ENCODE measurements at regions of chr13 and their contacts with region 1.

Region 1: DNA sequence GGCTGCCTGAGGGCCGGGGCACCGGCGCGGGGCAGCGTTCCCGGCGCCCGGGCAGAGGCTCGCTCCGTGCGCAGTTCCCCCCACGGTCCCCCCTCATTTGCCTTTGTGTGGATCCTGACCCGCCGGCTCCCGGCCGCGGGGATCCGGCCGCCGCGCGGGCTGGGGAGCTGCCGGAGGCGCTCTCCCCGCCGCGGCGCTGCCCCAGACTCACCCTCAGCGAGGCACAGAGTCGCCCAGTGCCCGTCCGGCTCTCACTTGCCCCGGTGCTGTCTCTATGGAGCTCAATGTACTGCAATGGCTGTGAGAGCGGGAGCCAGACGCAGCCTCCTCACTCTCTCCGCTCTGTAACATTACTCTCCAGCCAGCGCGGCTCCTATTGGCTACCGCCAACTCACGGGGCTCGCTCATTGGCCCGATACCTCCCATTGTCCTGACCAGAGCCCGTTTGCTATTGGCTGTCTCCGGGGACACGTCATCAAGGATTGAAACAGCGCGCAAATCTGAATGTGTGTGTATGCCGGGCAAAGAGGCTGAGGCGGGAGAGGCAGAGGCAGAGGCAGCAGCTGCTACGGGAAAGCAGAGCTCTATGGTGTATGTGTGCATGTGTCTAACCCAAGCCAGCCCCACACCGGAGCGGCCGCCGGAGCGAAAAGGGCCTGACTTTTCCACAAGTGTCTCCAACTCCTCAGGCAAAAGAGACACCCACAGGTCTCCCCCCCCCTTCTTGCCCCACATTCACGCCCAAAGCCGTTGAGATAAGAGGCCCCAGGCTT is at the start of gene HMGB1:
- DNase-seq: peak; percentile 98 to 99
- H3K4me3 ChIP-seq: peak within 1 kb of the TSS; percentile 58 to 90 (median 59)
- H3K27ac ChIP-seq: peak within 1 kb of the TSS; percentile 93 to 100 (median 99)
- H3K4me1 ChIP-seq: peaks cover 16 to 25% of the 10 kb centered on the region in 2 donors
- H3K27me3 ChIP-seq: no peaks in the 10 kb centered on the region
- CTCF ChIP-seq: peak in 1 of 6 experiments; percentile 5
- POLR2A ChIP-seq: peak; percentile 94 to 99
- total RNA-seq, gene HMGB1: 255 to 467 (median 327) TPM

Region 2: GRCh38 chr13:30132623-30133553 is 332.9 kb before region 1 on chr13:
- intact Hi-C with region 1: loop called (anchors 5 kb)
- DNase-seq: peak; percentile 99 to 100
- H3K4me3 ChIP-seq: no peak overlapping the region
- H3K27ac ChIP-seq: no peak overlapping the region
- H3K4me1 ChIP-seq: peaks cover under 1 to 20% of the 10 kb centered on the region in 2 donors
- H3K27me3 ChIP-seq: no peaks in the 10 kb centered on the region
- CTCF ChIP-seq: peak; percentile 79 to 94 (median 91)
- POLR2A ChIP-seq: no peak

Region 3: DNA sequence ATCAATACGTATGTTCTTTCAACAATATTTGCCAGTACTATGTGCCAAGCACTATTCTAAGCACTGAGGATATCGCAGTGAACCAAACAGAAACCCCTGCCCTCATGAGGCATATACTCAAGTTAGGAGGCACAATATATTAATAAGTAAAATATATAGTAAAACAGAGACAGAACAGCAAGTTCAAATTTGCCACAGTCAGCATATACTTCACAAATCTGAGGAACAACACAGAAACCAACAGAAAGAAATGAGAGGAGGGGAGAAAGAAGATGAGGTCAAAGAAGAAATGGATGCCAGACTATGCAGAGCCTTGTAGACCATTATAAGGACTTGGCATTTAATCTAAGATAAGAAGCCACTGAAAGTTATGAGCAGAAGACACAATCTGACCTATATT is 218.4 kb before region 1 on chr13:
- intact Hi-C with region 1: no loop called
- DNase-seq: no peak
- H3K4me3 ChIP-seq: no peak overlapping the region
- H3K27ac ChIP-seq: no peak overlapping the region
- H3K4me1 ChIP-seq: no peaks in the 10 kb centered on the region
- H3K27me3 ChIP-seq: no peaks in the 10 kb centered on the region
- CTCF ChIP-seq: no peak
- POLR2A ChIP-seq: no peak

Region 4: GRCh38 chr13:30617315-30618185 is 151.8 kb after region 1 on chr13 and contains the start of gene USPL1:
- intact Hi-C with region 1: loop called (anchors 10 kb)
- DNase-seq: peak; percentile 98
- H3K4me3 ChIP-seq: peak within 1 kb of the TSS; percentile 49 to 93 (median 82)
- H3K27ac ChIP-seq: peak within 1 kb of the TSS; percentile 99 to 100 (median 99)
- H3K4me1 ChIP-seq: peaks cover 10 to 26% of the 10 kb centered on the region in 2 donors
- H3K27me3 ChIP-seq: no peaks in the 10 kb centered on the region
- CTCF ChIP-seq: peak in 4 of 6 experiments; percentile 29 to 68 (median 58)
- POLR2A ChIP-seq: peak; percentile 94 to 95
- total RNA-seq, gene USPL1: 23.6 to 31.0 (median 27.5) TPM

Region 5: GRCh38 chr13:30802953-30803478 is 337.2 kb after region 1 on chr13:
- intact Hi-C with region 1: loop called (anchors 10 kb)
- DNase-seq: peak; percentile 85 to 87
- H3K4me3 ChIP-seq: peak overlapping the region in 2 of 3 donors; percentile 6 to 16
- H3K27ac ChIP-seq: peak overlapping the region in 1 of 3 donors; percentile 34
- H3K4me1 ChIP-seq: peaks cover 0 to 6% of the 10 kb centered on the region in 2 donors
- H3K27me3 ChIP-seq: no peaks in the 10 kb centered on the region
- CTCF ChIP-seq: peak; percentile 81 to 94 (median 86)
- POLR2A ChIP-seq: peak in 1 of 2 donors; percentile 29

Measured in thyroid gland (tissue), 4 donors.